HepG2 (cell line): ENCODE measurements at regions of chr2 and their contacts with region 1.

Region 1: GRCh38 chr2:27071277-27071989 is at the start of gene OST4:
- DNase-seq: peak; percentile 88
- ATAC-seq: peak; percentile 88
- H3K4me3 ChIP-seq: peak within 1 kb of the TSS; percentile 92 to 99 (median 98)
- H3K27ac ChIP-seq: peak within 1 kb of the TSS; percentile 72
- H3K4me1 ChIP-seq: peaks cover 70% of the 10 kb centered on the region
- H3K27me3 ChIP-seq: peaks cover 0 to 16% of the 10 kb centered on the region in 2 experiments; a peak in 2 of 5 replicates
- CTCF ChIP-seq: peak; percentile 36
- EP300 ChIP-seq: peak in 1 of 2 experiments; percentile 45; a peak in 1 of 4 replicates
- POLR2A ChIP-seq: peak; percentile 93 to 97
- RAD21 ChIP-seq: peak; percentile 52
- total RNA-seq, gene OST4: 498 and 508 TPM in 2 replicates

Region 2: DNA sequence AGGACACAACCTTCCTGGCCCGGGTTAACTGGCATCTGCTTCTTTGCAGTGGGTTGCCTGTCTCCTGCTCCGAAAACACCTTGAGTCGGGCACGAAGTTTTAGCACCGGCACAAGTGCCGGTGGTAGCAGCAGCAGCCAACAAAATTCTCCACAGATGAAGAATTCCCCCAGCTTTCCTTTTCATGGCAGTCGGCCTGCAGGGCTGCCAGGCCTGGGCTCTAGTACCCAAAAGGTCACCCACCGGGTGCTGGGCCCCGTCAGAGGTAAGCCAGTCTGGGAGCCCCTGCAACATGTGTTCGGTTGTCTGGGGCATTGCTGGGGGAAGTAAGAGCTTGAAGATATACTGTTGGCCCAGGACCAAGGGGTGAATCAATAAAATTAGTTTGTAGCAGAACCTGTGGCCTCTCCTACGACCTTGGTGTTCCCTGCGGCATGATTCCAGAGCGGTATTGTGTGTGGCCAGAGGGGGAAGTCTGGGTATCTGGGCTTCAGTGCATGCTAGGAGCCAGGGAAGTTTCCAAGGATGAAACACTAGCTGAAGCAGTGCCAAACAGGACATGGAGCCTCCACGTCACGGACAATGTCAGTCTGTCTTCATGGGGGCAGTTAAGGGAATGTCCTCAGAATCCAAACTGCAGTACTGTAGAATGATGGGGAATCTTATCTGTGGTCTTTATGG is 12.2 kb before region 1 on chr2:
- CTCF ChIA-PET with region 1: no interaction called
- POLR2A ChIA-PET with region 1: interaction called, 88 read pairs
- in situ Hi-C with region 1: no loop called
- intact Hi-C with region 1: no loop called
- DNase-seq: no peak
- ATAC-seq: peak; percentile 41
- H3K4me3 ChIP-seq: no peak overlapping the region
- H3K27ac ChIP-seq: no peak overlapping the region
- H3K4me1 ChIP-seq: no peaks in the 10 kb centered on the region
- H3K27me3 ChIP-seq: no peaks in the 10 kb centered on the region
- CTCF ChIP-seq: no peak
- EP300 ChIP-seq: no peak
- POLR2A ChIP-seq: peak in 1 of 2 experiments; percentile 18; a peak in 2 of 4 replicates
- RAD21 ChIP-seq: no peak

Region 3: DNA sequence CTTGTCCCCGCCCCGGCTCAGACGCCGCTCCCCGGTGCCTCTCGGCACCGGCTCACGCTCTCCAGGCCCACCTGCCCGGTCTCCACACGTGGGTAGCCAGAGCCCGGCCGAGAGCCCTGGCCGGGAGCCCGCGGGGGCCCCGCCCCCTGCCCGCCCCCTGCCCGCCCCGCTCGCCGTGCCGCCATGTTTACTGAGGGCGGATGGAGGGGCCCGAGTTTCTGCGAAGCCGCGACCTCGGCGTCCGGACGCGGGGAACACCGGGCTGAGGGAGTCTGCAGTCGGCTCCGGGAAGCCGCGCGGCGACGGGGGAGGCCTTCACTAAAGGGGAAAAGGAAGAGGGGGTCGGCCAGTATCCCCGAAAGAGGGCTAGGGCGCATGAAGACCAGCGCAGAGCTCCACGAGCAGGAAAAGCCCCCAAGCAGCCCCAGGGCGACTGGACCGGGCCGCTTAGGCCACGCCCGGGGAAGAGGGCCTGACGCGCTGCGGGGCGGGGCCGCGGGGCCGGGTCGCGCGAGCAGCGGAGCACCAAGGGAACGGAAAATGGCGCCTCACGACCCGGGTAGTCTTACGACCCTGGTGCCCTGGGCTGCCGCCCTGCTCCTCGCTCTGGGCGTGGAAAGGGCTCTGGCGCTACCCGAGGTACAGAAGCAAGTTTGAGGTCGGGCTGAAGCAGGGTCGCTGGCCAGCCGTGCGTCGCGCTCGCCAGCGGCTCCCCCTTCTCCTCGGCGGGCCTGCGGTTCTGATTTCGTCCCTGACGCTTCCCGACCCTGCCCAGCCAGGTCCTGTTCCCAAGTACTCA is 140.6 kb after region 1 on chr2 and contains the starts of genes ATRAID and SLC5A6:
- CTCF ChIA-PET with region 1: no interaction called
- POLR2A ChIA-PET with region 1: interaction called, 12 read pairs
- in situ Hi-C with region 1: no loop called
- intact Hi-C with region 1: no loop called
- DNase-seq: peak; percentile 82
- ATAC-seq: peak; percentile 91
- H3K4me3 ChIP-seq: peak within 1 kb of the TSS; percentile 87 to 93 (median 89)
- H3K27ac ChIP-seq: peak within 1 kb of the TSS; percentile 97
- H3K4me1 ChIP-seq: peaks cover 67% of the 10 kb centered on the region
- H3K27me3 ChIP-seq: no peaks in the 10 kb centered on the region; a peak in 1 of 5 replicates
- CTCF ChIP-seq: no peak; the same call in 1 of the 2 replicates
- EP300 ChIP-seq: peak in 1 of 2 experiments; percentile 11; a peak in 1 of 4 replicates
- POLR2A ChIP-seq: peak; percentile 95 to 98
- RAD21 ChIP-seq: peak; percentile 71
- total RNA-seq, gene ATRAID: 130 and 207 TPM in 2 replicates
- total RNA-seq, gene SLC5A6: 73.9 and 135 TPM in 2 replicates